Activated T-helper 1 cell treated with anti-CD3 and anti-CD28 coated beads, Interleukin-12 subunit alpha, Interleukin-12 subunit beta, Interleukin-2, Interleukin-4 antibody, amounts not matched to agents 30 ng/mL and 10 ng/mL and 1 ng/mL, durations not matched to agents 14 hours and 24 hours and 36 hours (primary cell): ENCODE measurements at regions of chr10 and their contacts with region 1.

Region 1: GRCh38 chr10:102713814-102714620 is at the start of gene ARL3:
- DNase-seq: peak; percentile 95
- H3K4me3 Mint-ChIP-seq: peak within 1 kb of the TSS; percentile 88
- H3K27ac Mint-ChIP-seq: peak within 1 kb of the TSS; percentile 91
- H3K4me1 Mint-ChIP-seq: peaks cover 52% of the 10 kb centered on the region
- H3K27me3 Mint-ChIP-seq: no peaks in the 10 kb centered on the region
- total RNA-seq, gene ARL3: 6.6 and 6.8 TPM in 2 replicates

Region 2: GRCh38 chr10:101830322-101831168 is 883.5 kb before region 1 on chr10:
- intact Hi-C with region 1: loop called (anchors 5 kb)
- DNase-seq: peak; percentile 85
- H3K4me3 Mint-ChIP-seq: peak overlapping the region; percentile 79
- H3K27ac Mint-ChIP-seq: peak overlapping the region; percentile 94
- H3K4me1 Mint-ChIP-seq: peaks cover 51% of the 10 kb centered on the region
- H3K27me3 Mint-ChIP-seq: no peaks in the 10 kb centered on the region

Region 3: DNA sequence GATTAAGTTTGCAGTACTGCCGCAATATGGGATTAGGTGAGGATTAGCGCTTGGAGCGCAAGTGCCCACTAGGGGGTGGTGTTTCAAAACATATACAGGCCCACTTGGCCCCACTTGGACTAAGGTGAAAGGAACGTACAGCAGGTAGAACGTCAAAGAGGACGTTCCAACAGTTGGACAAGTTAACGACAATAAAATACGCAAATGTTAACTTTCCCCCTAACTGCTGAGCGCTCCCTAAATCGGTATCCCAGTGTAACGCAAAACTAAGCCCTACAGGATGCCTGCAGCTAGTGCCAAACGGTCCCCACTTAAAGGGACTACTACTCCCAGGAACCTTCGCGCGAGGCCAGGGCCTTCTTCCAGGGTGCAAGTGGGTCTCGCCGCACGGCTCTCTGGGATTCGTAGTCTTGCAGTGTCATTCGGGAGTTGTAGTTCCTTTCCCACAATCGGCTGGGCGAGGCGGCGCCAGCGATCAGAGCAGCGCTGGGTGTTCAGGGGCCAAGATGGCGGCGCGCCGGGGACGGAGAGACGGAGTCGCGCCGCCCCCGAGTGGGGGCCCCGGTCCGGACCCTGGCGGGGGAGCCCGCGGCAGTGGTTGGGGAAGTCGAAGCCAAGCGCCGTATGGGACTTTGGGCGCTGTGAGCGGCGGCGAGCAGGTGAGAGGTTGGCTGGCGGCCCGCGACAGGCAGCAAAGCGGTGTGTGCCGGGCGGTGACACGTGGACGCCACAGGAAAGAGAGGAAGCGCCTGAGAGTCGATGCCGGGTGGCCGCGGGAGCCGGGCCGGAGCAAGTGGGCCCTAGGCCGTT is 581.2 kb before region 1 on chr10 and contains the start of gene PPRC1:
- intact Hi-C with region 1: loop called (anchors 5 kb)
- DNase-seq: peak; percentile 97
- H3K4me3 Mint-ChIP-seq: peak within 1 kb of the TSS; percentile 95
- H3K27ac Mint-ChIP-seq: peak within 1 kb of the TSS; percentile 94
- H3K4me1 Mint-ChIP-seq: peaks cover 29% of the 10 kb centered on the region
- H3K27me3 Mint-ChIP-seq: no peaks in the 10 kb centered on the region
- total RNA-seq, gene PPRC1: 112 and 115 TPM in 2 replicates

Region 4: DNA sequence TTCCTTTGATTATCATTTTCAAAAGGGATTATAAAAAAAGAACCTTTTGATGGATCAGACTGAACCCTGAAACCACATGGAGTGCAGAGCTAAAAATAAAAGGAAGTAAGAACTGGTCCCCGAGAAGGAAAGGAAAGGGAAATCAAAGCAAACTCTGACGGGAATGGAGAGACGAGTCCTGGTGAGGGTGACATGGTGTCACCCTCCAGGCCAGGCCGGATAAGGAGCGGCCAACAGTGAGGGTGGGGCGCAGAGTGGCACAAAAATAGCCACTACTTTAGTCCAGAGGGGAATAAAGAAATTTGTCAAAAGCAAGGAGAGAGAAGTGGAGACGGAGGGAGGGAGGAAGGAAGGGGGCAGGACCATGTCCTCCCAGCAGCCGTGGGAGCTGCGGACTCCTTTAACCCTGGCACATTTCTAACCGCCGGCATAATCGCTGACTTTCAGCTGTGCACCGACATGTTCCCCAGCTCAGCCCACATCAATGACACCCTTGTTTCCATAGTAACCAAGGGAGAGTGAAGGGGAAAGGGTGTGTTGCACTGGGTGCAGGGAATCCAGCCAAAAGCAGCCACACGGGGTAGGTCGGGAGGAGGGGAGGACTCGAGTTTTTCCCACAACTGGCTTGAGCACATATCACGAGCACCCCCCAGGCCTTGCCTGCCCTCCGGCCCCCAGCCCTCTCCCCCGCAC is 40.1 kb before region 1 on chr10:
- intact Hi-C with region 1: loop called (anchors 2 kb)
- DNase-seq: peak; percentile 69
- H3K4me3 Mint-ChIP-seq: peak overlapping the region; percentile 71
- H3K27ac Mint-ChIP-seq: peak overlapping the region; percentile 69
- H3K4me1 Mint-ChIP-seq: peaks cover 25% of the 10 kb centered on the region
- H3K27me3 Mint-ChIP-seq: no peaks in the 10 kb centered on the region

Region 5: GRCh38 chr10:102853944-102854694 is 140.1 kb after region 1 on chr10 and contains the start of gene BORCS7:
- intact Hi-C with region 1: loop called (anchors 1 kb)
- DNase-seq: peak; percentile 84
- H3K4me3 Mint-ChIP-seq: peak within 1 kb of the TSS; percentile 82
- H3K27ac Mint-ChIP-seq: peak within 1 kb of the TSS; percentile 92
- H3K4me1 Mint-ChIP-seq: peaks cover 19% of the 10 kb centered on the region
- H3K27me3 Mint-ChIP-seq: no peaks in the 10 kb centered on the region
- total RNA-seq, gene BORCS7: 9.7 and 12.6 TPM in 2 replicates

Region 6: DNA sequence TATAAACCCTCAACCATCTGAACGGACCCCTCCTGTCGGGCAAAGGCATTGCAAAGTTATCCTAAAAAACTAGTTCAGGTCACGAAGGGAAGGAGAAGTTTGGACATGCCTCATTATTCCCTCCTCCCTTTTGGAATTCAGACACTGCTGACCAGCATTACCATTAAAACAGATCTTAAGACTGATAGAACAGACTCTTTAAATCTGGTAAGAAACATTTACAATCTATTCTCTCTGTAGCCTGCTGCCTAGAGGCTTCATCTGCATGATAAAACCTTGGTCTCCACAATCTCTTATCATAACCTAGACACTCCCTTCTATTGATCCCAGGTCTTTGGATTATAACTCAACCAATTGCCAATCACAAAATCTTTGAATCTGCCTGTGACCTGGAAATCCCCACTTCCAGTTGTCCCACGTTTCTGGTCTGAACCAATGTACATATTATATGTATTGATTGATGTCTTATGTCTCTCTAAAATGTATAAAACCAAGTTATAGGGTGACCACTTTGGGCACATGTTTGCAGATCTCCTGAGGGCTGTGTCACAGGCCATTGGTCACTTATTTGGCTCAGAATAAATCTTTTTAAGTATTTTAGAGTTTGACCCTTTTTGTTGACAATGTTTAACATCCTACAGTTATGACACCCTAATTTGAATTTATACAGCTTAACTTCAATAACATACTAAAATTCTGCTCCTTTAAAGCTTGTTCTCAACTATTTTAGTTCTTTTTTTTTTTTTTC is 180.6 kb after region 1 on chr10:
- intact Hi-C with region 1: no loop called
- DNase-seq: no peak
- H3K4me3 Mint-ChIP-seq: no peak overlapping the region
- H3K27ac Mint-ChIP-seq: no peak overlapping the region
- H3K4me1 Mint-ChIP-seq: no peaks in the 10 kb centered on the region
- H3K27me3 Mint-ChIP-seq: no peaks in the 10 kb centered on the region

Region 7: GRCh38 chr10:103367782-103368518 is 653.9 kb after region 1 on chr10 and contains the start of gene TAF5:
- intact Hi-C with region 1: loop called (anchors 5 kb)
- DNase-seq: peak; percentile 89
- H3K4me3 Mint-ChIP-seq: peak within 1 kb of the TSS; percentile 89
- H3K27ac Mint-ChIP-seq: peak within 1 kb of the TSS; percentile 91
- H3K4me1 Mint-ChIP-seq: peaks cover 5% of the 10 kb centered on the region
- H3K27me3 Mint-ChIP-seq: no peaks in the 10 kb centered on the region
- total RNA-seq, gene TAF5: 10.4 and 11.0 TPM in 2 replicates